Activated T-helper 2 cell treated with anti-CD3 and anti-CD28 coated beads, Interferon-gamma antibody, Interleukin-2, Interleukin-4, amounts not matched to agents 10 μg/mL and 5 μg/mL and 100 μg/mL, durations not matched to agents 14 hours and 24 hours and 36 hours (primary cell): ENCODE measurements at regions of chr3 and their contacts with region 1.

Region 1: GRCh38 chr3:170572665-170573253 is 13.1 kb downstream of the SLC7A14 start:
- DNase-seq: no peak
- H3K4me3 Mint-ChIP-seq: no peak overlapping the region
- H3K27ac Mint-ChIP-seq: peak overlapping the region; percentile 62
- H3K4me1 Mint-ChIP-seq: peaks cover 24% of the 10 kb centered on the region
- H3K27me3 Mint-ChIP-seq: peaks cover 7% of the 10 kb centered on the region

Region 2: GRCh38 chr3:170523248-170523647 is 49.5 kb before region 1 on chr3:
- intact Hi-C with region 1: loop called (anchors 5 kb)
- DNase-seq: no peak
- H3K4me3 Mint-ChIP-seq: no peak overlapping the region
- H3K27ac Mint-ChIP-seq: no peak overlapping the region
- H3K4me1 Mint-ChIP-seq: peaks cover 8% of the 10 kb centered on the region
- H3K27me3 Mint-ChIP-seq: peaks cover 22% of the 10 kb centered on the region

Region 3: DNA sequence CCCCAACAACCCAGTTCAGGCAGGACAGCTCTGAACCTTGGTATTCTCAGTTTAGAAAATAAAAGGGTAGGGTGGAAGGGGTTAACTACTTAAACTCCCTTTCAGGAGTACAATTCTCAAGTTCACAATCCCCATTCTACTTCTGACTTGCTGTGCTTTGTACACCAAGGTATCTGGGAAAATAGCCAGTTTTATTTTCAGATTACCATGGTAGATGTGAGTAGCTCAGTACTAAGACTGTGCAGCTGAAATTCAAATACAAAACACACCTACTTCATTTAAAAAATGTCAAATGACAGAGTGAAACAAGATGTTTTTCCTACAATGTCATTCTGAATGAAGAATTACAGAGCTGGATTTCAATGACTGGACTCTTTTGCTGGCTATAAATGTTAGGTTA is 14.3 kb before region 1 on chr3:
- intact Hi-C with region 1: no loop called
- DNase-seq: no peak
- H3K4me3 Mint-ChIP-seq: no peak overlapping the region
- H3K27ac Mint-ChIP-seq: no peak overlapping the region
- H3K4me1 Mint-ChIP-seq: peaks cover 11% of the 10 kb centered on the region
- H3K27me3 Mint-ChIP-seq: peaks cover 31% of the 10 kb centered on the region

Region 4: DNA sequence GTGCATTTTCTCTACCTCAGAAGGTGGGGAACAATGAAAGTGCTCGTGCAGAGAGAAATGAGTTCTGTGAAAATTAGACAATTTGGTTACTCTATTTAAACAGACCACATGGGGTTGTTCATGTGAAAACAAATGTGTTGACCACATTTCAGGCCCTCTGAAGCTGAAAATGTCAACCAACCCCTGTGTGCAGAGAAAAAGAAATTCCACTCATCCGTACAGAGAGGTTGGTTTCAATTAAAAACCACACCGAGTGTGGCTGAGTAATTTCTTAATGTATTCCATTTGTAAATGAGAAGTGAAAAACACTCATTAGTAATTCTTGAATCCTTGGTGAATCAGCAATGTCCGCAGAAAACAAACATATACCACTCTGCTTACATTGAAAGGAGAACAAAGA is 60.0 kb after region 1 on chr3:
- intact Hi-C with region 1: loop called (anchors 2 kb)
- DNase-seq: no peak
- H3K4me3 Mint-ChIP-seq: no peak overlapping the region
- H3K27ac Mint-ChIP-seq: no peak overlapping the region
- H3K4me1 Mint-ChIP-seq: peaks cover 8% of the 10 kb centered on the region
- H3K27me3 Mint-ChIP-seq: peaks cover 23% of the 10 kb centered on the region

Region 5: DNA sequence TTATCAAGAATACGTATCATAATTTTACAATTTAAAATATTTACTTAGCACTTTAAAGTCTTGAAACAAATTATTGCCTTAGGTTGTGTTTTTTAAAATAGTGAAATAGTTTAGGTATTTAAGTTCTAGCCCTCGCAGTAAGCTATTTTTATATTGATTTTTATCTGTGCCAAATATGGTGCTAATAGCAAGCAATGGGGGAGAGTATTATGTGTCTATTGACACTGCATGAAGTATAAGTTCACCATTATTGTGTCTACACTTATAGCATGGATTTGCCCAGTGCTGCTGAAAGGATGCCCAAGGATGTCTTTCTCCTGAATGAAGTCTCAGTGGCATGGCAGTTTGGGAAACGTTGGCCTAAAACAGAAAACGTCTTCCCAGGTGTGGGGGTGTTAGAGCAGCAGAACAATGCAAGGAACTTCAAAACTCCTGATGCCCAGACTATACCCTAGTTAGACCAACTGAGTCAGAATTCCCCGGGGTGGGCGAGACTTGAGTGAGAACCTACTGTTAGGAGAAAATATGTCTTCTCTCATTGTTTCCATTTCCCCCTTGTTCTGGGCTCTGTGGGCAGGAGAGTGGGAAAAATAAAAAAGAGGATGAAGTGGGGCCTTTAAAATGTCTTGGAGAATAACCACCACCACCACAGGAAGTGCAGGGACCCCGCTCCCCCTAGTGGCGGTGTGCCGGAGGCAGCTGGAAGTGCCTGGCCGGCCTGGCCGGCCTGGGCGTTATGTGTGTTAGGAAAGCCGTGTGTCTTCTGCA is 117.3 kb after region 1 on chr3:
- intact Hi-C with region 1: loop called (anchors 5 kb)
- DNase-seq: peak; percentile 20
- H3K4me3 Mint-ChIP-seq: no peak overlapping the region
- H3K27ac Mint-ChIP-seq: no peak overlapping the region
- H3K4me1 Mint-ChIP-seq: peaks cover 5% of the 10 kb centered on the region
- H3K27me3 Mint-ChIP-seq: no peaks in the 10 kb centered on the region